PC-3 (cell line): ENCODE measurements at regions of chr10 and their contacts with region 1.

Region 1: GRCh38 chr10:15725603-15726002 is 5.9 kb upstream of the ITGA8 start:
- DNase-seq: peak; percentile 48
- ATAC-seq: peak; percentile 83
- H3K4me3 ChIP-seq: no peak overlapping the region
- H3K27ac ChIP-seq: no peak overlapping the region
- H3K4me1 ChIP-seq: no peaks in the 10 kb centered on the region
- H3K27me3 ChIP-seq: peaks cover 3% of the 10 kb centered on the region; the same call in 1 of the 2 replicates
- CTCF ChIP-seq: peak; percentile 57

Region 2: DNA sequence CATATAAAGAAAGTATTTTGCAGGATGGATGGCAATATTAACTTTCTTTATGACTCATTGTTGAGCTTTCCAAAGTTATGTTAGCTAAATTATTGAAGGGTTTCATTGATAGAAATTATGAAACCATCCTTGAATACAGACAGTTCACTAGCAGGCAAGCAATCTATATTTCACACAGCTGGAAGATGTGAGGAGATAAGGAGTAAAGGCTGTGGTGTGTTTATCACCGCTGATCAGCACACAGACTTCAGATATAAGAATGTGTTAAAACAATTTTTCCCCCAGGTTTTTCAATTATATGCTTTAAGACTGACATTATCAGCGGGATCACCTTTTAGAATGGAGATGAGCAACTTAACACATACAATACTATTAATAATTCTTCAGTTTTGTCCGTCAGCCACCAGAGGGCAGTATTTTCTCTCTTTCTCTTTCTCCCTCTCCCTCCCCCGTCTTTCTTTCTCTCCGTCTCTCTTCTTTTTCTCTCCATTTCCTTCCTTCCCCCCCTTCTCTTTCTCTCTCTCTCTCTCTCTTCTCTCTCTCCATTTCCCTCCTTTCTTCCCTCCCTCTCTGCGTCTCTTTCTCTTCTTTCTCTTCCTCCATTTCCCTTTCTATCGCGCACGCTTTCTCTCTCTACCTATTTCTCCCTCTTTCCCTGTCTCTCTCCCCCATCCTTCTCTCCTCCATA is 291.6 kb before region 1 on chr10:
- CTCF ChIA-PET with region 1: no interaction called
- POLR2A ChIA-PET with region 1: no interaction called
- intact Hi-C with region 1: loop called (anchors 2 kb)
- DNase-seq: peak; percentile 50
- ATAC-seq: peak; percentile 58
- H3K4me3 ChIP-seq: peak overlapping the region; percentile 60
- H3K27ac ChIP-seq: no peak overlapping the region
- H3K4me1 ChIP-seq: no peaks in the 10 kb centered on the region; the same call in 1 of the 2 replicates
- H3K27me3 ChIP-seq: no peaks in the 10 kb centered on the region
- CTCF ChIP-seq: peak; percentile 55

Region 3: DNA sequence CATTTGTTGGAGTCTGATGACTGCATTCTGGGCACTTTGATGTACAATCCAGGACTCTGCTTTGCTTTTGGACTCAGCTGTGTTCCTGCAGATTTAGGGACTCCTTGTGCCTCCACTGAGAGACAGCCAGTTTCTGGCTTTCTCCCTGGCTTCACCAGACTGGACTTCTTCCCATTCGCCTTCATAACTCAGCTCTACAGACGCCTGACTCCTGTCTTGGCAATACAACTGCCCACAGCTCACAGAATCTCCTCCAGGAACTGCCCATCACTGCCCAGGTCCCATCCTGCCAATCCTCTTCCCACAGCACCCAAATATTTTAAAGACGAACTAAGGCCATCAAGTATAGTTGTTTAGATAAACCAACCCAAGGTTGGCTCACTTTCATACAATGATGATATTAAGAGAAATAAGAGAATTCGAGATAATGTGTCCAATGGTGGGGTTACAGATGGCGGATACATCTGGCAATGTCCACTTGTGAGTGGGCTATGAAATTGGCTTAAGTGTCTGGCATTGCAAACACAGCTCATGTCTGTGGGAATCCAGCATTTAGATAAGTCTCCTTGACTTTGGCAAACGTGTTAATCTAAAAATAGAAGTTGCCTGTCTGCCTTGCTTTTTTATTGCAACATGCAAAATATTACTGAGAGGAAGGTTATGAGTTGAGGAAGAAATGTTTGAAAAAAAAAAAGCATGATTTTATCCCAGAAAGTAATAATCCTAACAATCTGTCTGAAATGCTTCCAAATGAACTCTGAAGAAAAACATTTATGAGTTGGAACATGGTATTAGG is 101.0 kb before region 1 on chr10:
- CTCF ChIA-PET with region 1: interaction called, 19 read pairs
- POLR2A ChIA-PET with region 1: no interaction called
- intact Hi-C with region 1: no loop called
- DNase-seq: no peak
- ATAC-seq: no peak
- H3K4me3 ChIP-seq: no peak overlapping the region
- H3K27ac ChIP-seq: no peak overlapping the region
- H3K4me1 ChIP-seq: no peaks in the 10 kb centered on the region
- H3K27me3 ChIP-seq: peaks cover 14% of the 10 kb centered on the region; the same call in 1 of the 2 replicates
- CTCF ChIP-seq: no peak